Naive thymus-derived CD4-positive, alpha-beta T cell (primary cell): ENCODE measurements at regions of chr4 and their contacts with region 1.

Region 1: DNA sequence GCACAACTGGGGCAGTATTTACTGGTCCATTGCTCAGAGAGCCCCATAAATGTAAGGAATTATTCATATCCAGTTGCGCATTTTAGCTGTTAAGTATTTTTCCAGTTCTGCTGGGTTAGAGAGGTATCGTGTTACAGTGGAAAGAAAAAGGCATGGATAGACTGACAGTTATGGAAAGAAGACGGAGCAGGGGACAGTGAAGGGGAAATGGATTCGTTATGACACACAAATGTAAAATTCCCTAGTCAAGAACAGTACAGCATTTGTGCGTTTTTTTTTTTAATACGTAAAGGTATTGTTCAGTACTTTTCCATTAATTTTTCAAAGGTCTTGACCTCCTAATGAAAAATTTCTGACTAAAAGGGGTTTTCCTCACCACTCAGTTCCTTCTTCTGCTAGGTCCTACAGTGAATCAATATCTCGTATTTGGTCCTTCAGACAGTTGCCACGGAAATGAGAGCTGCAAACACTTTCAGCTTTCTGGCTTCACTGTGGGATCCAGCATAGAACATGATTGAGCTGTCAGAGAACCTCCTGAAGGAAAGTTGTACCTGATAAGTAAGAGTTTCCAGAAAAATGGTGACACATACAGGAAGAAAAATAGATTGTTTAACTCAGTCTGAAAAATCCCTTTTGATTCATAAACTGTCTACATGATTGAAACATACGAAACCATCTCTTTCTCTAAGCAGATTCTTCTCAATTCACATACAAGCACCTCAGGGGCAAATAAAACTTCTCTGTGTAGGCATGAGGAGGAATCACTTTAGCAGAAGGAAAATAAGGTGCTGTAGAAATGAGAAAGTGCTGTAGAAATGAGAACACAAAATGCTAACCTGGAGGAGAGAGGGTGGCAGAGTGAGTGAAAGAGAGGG is 21.8 kb upstream of the BBS12 start:
- DNase-seq: no peak
- ATAC-seq: no peak
- H3K4me3 ChIP-seq: no peak overlapping the region
- H3K4me3 Mint-ChIP-seq: peak overlapping the region in 5 of 10 donors; percentile 14 to 86 (median 33)
- H3K27ac ChIP-seq: no peak overlapping the region
- H3K27ac Mint-ChIP-seq: peak overlapping the region in 4 of 9 donors; percentile 14 to 95 (median 63)
- H3K4me1 ChIP-seq: peaks cover 0 to 5% of the 10 kb centered on the region in 2 donors
- H3K4me1 Mint-ChIP-seq: peaks cover 0 to 72% (median 12%) of the 10 kb centered on the region in 7 donors
- H3K27me3 ChIP-seq: no peaks in the 10 kb centered on the region
- H3K27me3 Mint-ChIP-seq: peaks cover 0 to 13% (median 0%) of the 10 kb centered on the region in 5 donors

Region 2: GRCh38 chr4:122666527-122667245 is 44.0 kb before region 1 on chr4:
- CTCF ChIA-PET with region 1: no interaction called
- POLR2A ChIA-PET with region 1: no interaction called
- intact Hi-C with region 1: loop called (anchors 2 to 5 kb)
- DNase-seq: peak in 2 of 9 donors; percentile 0 to 12
- ATAC-seq: peak; percentile 32
- H3K4me3 ChIP-seq: no peak overlapping the region
- H3K4me3 Mint-ChIP-seq: peak overlapping the region in 1 of 10 donors; percentile 60
- H3K27ac ChIP-seq: no peak overlapping the region
- H3K27ac Mint-ChIP-seq: peak overlapping the region in 4 of 9 donors; percentile 28 to 79 (median 66)
- H3K4me1 ChIP-seq: peaks cover 0 to 3% of the 10 kb centered on the region in 2 donors
- H3K4me1 Mint-ChIP-seq: peaks cover 13 to 75% (median 31%) of the 10 kb centered on the region in 7 donors
- H3K27me3 ChIP-seq: no peaks in the 10 kb centered on the region
- H3K27me3 Mint-ChIP-seq: no peaks in the 10 kb centered on the region